Colonic mucosa (tissue), 4 donors: ENCODE measurements at regions of chr1 and their contacts with region 1.

Region 1: DNA sequence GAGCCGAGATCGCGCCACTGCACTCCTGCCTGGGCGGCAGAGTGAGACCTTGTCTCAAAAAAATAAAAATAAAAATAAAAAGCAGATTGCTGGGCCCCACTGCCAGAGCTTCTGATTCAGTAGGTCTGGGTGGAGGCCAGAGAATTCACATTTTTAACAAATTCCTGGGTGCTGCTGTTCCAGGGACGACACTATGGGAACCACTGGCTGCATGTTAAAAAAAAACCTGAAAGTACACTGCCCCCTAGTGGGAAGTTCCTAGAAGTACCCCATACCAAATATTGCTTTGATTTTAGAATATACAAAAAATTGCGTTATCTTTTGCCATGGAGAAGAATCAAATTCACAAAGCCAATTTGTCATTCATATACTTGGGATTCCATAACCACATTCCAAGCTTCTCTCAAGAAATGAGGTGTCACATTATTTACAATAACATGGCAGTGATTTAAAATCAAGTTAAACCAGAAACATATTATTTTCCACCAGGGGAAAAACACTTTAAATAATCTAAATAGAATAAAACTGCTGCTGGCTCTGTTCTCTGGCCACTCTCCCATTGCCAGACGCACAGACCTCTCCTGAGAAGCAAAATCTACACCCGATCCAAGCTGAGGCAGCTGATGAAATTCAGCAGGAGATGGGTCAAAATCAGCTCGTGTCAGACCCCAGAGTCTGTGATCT is 27.4 kb downstream of the SYF2 start:
- DNase-seq: no peak
- H3K4me3 ChIP-seq: no peak overlapping the region
- H3K27ac ChIP-seq: no peak overlapping the region
- H3K4me1 ChIP-seq: no peaks in the 10 kb centered on the region
- H3K27me3 ChIP-seq: no peaks in the 10 kb centered on the region
- CTCF ChIP-seq: peak; percentile 79

Region 2: GRCh38 chr1:25117233-25117823 is 87.6 kb before region 1 on chr1:
- intact Hi-C with region 1: loop called (anchors 2 kb)
- DNase-seq: peak; percentile 59
- H3K4me3 ChIP-seq: no peak overlapping the region
- H3K27ac ChIP-seq: no peak overlapping the region
- H3K4me1 ChIP-seq: no peaks in the 10 kb centered on the region
- H3K27me3 ChIP-seq: no peaks in the 10 kb centered on the region
- CTCF ChIP-seq: peak; percentile 37

Region 3: DNA sequence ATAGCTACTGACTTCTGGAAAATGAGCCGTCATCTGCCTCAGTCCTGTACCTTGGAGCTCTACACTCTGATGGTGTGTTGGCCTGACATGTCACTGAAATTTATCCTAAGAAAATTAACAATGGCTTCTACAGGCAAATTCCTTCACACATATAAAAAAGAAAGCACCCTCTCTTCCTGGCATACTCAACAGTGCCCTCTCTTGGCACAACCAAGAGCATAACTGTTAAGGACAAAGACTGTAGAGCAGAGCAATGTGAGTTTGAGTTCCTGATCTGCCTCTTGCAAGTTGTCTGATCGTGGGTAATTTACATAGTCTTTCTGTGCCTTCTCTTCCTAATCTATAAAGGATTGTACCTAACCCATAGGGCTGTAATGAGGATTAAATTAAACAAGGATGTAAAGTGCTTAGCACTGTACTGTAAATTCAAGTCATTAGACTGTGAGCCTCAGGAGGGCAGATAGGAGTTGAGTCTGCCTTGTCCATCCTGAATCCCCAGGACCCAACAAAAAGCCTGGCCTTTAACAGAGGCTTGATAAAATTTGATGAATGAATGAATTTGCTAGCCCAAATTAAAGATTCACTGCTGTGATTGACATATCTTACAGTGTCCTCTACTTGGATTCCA is 56.2 kb before region 1 on chr1:
- intact Hi-C with region 1: loop called (anchors 10 kb)
- DNase-seq: peak; percentile 31
- H3K4me3 ChIP-seq: no peak overlapping the region
- H3K27ac ChIP-seq: no peak overlapping the region
- H3K4me1 ChIP-seq: no peaks in the 10 kb centered on the region
- H3K27me3 ChIP-seq: no peaks in the 10 kb centered on the region
- CTCF ChIP-seq: peak; percentile 33